ENCODE measurements at regions of chr16 and their contacts with region 1.

Region 1: DNA sequence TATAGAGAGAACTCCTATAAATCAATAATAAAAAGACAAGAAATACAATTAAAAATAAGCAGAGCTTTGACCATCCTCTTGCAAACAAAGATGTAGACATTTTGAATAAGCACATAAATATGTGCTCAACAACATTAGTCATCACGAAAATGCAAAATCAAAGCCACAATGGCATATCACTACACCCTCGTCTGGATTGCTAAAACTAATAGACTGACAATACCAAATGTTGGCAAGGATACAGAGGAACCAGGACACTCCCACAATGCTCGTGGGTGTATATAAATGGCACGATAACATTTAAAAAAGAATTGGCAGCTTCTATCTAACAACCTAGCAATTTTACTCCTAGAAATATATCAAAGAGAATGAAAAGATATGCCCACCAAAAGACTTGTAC is 530.8 kb downstream of the HAPSTR1 start:
- DNase-seq: no peak
- ATAC-seq: no peak

Region 2: GRCh38 chr16:7921345-7921744 is 1700.9 kb before region 1 on chr16:
- intact Hi-C with region 1: no loop called
- DNase-seq: no peak
- ATAC-seq: no peak

Region 3: DNA sequence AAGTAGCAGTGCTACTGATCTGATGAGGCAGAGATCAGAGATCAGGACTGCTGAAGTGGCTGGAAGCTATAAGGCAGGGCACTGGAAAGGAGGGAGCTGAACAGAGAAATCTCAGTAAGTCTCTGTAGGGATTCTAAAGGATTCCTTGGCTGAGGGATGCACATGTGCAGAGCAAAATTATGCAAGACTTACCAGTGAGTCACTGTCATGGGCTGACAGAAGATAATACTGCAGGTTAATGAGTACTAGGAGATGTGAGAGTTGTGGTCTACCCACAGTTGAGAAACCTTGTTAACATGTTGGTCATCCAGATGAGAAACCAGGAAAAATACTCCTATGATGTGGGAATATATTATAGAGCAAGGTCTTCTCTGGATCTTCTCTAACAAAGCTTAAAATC is 152.8 kb before region 1 on chr16:
- intact Hi-C with region 1: no loop called
- DNase-seq: no peak
- ATAC-seq: no peak

Region 4: GRCh38 chr16:9602189-9602588 is 20.1 kb before region 1 on chr16:
- intact Hi-C with region 1: loop called (anchors 1 kb)
- DNase-seq: no peak
- ATAC-seq: no peak

Measured in sciatic nerve (tissue), 2 donors.